K562 (cell line): ENCODE measurements at regions of chr19 and their contacts with region 1.

Region 1: GRCh38 chr19:18919086-18919899 is at the starts of genes COPE and DDX49:
- DNase-seq: peak; percentile 97 to 100 (median 98)
- ATAC-seq: peak; percentile 98
- H3K4me3 ChIP-seq: peak within 1 kb of the TSS; percentile 95
- H3K27ac ChIP-seq: peak within 1 kb of the TSS; percentile 90
- H3K4me1 ChIP-seq: peaks cover 8 to 27% of the 10 kb centered on the region in 2 experiments; a peak in 4 of 5 replicates
- H3K27me3 ChIP-seq: no peaks in the 10 kb centered on the region
- CTCF ChIP-seq: no peak
- EP300 ChIP-seq: no peak
- POLR2A ChIP-seq: peak; percentile 95
- RAD21 ChIP-seq: no peak
- polyA plus RNA-seq, gene COPE: 5.8 to 18.3 TPM
- polyA plus RNA-seq, gene DDX49: 1.1 to 6.3 TPM

Region 2: DNA sequence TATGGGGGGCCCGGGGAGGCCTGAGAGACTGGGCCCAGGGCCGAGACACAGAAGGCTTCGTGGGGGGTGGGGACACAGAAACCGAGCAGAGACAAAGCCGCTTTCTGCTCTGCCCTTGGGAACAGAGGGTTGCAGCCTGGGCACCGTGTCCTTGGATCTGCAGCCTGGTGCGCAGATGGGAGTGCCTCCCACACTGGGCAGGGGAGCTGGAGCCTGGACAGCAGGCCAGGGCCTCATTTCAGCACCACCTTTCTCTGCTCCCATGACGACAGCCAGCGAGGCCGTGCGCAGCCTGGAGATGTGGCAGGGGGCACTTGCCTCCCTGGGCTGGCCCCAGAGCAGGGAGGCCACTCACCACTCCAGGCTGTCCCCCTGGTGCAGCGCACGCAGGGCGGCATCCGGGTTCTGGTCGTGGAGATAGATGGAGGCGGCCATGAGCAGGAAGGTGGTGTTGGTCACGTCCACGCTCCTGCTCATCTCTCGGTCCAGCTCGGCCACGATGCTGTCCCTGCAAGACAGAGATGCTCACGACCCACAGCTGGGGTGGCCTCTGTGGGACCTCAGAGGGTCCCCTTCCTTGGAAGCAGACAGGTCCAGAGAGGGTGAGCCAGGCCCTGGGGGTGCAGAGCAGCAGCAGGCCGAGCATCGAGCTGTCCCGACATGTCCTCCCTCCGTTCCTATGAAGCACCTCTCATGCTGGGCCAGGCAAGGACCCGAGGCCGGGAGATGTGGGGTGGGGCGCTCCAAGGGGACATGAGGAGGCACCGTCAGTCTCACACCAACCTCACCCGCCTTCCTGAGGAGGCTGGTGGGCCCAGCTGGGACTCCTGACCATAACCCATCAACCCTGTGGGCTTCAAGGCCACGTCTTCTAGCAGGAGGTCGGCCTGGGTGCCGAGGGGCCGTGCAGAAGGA is 12.4 kb before region 1 on chr19:
- CTCF ChIA-PET with region 1: no interaction called
- POLR2A ChIA-PET with region 1: interaction called, 37 read pairs
- in situ Hi-C with region 1: no loop called
- intact Hi-C with region 1: no loop called
- DNase-seq: no peak
- ATAC-seq: no peak
- H3K4me3 ChIP-seq: no peak overlapping the region
- H3K27ac ChIP-seq: no peak overlapping the region
- H3K4me1 ChIP-seq: peaks cover 0 to 50% of the 10 kb centered on the region in 2 experiments; a peak in 2 of 5 replicates
- H3K27me3 ChIP-seq: no peaks in the 10 kb centered on the region
- CTCF ChIP-seq: no peak
- EP300 ChIP-seq: no peak
- POLR2A ChIP-seq: no peak; the same call in none of the 2 replicates
- RAD21 ChIP-seq: no peak

Region 3: GRCh38 chr19:18932216-18932841 is 13.0 kb after region 1 on chr19:
- CTCF ChIA-PET with region 1: no interaction called
- POLR2A ChIA-PET with region 1: interaction called, 34 read pairs
- in situ Hi-C with region 1: no loop called
- intact Hi-C with region 1: no loop called
- DNase-seq: peak; percentile 92 to 98 (median 98)
- ATAC-seq: peak; percentile 98
- H3K4me3 ChIP-seq: peak overlapping the region; percentile 50
- H3K27ac ChIP-seq: no peak overlapping the region
- H3K4me1 ChIP-seq: peaks cover 5 to 28% of the 10 kb centered on the region in 2 experiments; a peak in 4 of 5 replicates
- H3K27me3 ChIP-seq: no peaks in the 10 kb centered on the region
- CTCF ChIP-seq: no peak
- EP300 ChIP-seq: no peak
- POLR2A ChIP-seq: no peak
- RAD21 ChIP-seq: no peak